GM10248 (cell line): ENCODE measurements at regions of chr16 and their contacts with region 1.

Region 1: DNA sequence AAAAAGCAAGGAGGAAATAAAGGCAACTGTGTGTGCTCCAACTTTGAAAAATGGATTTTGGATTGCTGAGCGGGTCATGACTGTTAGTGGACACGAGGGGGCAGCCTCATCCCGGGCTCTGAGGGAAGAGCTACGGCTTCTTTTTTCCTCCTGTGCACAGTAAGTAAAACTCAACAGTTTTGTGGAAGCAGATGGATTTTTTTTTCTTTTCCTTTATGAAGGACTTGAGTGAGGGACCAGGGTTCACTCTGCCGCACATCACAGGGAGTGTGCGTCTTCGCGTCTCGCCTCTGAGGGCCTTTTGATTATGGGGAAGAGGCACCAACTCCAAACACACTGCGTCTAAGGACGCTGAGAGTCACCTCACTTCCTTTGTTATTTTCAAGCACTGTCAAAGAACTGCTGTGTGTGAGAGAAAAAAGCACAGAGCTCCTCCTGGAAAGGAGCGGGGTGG is 80.3 kb upstream of the GOT2 start:
- DNase-seq: peak; percentile 66
- CTCF ChIP-seq: peak; percentile 90

Region 2: GRCh38 chr16:58264961-58265479 is 549.4 kb before region 1 on chr16:
- CTCF ChIA-PET with region 1: no interaction called
- POLR2A ChIA-PET with region 1: no interaction called
- DNase-seq: no peak
- CTCF ChIP-seq: no peak

Region 3: GRCh38 chr16:58744497-58744896 is 69.9 kb before region 1 on chr16:
- CTCF ChIA-PET with region 1: no interaction called
- POLR2A ChIA-PET with region 1: no interaction called
- DNase-seq: no peak
- CTCF ChIP-seq: no peak

Region 4: DNA sequence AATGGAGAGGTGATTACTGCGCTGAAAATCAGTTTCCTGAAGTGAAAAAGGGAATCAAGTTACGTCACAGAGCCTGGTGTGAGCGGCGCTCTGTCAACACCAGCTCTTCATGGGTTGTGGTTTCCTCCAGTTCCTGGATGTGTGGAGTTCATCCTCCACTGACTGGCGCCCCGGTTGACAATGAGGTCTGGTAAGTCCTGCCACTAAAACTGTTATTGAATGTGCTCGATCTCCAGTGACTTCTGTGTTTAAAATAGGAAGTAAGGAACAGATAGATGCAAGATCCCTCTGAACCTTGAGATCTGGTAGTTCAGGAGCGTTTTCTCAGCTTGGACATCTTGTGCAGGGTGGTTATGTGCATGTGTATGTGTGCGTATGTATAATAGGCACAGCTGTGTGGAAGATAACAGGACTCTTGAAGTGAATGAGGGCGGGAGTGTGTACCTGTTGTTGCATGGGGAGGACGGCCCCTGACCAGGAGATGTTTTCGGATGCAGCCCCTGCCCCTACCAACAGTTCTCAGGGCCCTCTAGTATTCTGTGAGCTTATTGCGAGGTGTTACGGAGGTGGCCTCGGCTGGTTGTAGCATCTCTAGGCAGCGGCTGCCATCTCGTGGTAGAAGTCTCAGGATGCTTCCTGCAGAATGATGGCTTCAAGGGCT is 58.3 kb before region 1 on chr16:
- CTCF ChIA-PET with region 1: no interaction called
- POLR2A ChIA-PET with region 1: no interaction called
- DNase-seq: peak; percentile 75
- CTCF ChIP-seq: peak; percentile 90

Region 5: DNA sequence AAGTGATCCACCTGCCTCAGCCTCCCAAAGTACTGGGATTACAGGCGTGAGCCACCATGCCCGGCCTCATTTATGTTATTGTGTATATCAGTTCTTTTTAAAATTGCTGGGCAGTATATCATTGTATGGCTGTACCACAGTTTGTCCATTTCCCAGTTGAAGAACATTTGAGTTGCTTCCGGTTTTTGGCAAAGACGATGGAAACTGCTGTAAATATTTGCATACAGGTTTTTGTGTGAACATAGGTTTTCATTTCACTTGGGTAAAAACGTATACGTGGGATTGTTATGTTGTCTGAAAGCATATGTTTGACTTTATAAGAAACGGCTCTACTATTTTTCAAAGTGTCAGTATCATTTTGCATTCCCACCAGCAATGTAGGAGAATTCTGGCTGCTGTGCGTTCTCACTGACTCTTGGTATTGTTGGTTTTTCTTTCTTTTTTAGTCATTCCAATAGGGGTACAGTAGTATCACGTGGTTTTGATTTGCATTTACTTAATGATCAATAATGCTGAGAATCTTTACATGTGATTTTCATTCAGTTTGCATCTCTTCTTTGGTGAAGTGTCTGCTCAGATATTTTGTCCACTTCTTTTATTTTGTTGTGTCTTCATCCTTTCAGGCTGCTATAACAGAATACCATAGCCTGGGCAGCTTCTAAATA is 17.1 kb before region 1 on chr16:
- CTCF ChIA-PET with region 1: interaction called, 13 read pairs
- POLR2A ChIA-PET with region 1: no interaction called
- DNase-seq: no peak
- CTCF ChIP-seq: no peak